CD8-positive, alpha-beta T cell (primary cell): ENCODE measurements at regions of chr12 and their contacts with region 1.

Region 1: DNA sequence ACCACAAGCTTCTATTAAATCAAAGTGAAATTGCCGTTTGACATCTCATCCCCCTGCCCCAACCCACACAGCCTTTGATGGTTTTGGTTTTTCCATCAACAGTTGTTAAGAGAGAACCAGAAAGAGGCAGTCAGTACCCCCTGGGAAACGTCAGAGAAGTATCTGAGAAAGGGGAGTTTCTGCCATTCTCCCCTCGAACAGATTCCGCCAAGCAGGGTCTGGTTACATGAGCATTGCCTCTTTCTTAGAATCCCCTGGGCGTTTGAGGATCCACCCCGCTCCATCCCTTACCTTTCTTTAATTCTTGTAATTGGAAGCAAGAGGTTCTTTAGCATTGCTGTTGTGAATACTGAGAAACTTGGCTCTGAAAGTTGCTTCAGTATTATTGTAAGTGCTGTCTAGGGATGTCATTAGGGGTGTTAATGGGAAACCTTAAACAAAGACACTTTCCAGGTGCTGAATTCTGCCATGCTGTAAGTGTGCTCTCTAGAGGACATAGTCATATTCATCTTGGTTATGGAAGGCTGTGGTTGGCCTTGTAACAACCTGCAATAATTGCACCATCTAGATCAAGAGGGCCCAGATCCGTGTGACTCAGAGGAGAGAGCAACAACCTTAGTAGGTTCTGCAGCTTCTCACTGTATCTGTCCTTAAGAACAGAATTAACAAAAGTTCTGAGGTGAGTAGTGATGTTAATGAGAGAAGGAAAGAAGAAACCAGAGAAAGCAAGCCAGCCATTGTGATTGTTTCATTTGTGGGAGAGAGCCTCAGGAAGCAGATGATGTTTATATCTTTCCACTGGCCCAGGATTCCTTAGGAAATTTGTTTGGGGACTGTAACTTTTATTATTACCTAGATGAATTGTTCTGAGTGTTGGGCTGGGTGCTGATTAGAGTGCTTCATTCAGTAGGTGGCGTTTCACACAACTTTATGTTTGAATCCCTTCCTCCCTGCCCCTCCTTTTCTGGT is 9.0 kb downstream of the TMBIM6 start:
- DNase-seq: peak in 6 of 9 experiments; percentile 20 to 62 (median 41)
- ATAC-seq: peak; percentile 90
- H3K4me3 ChIP-seq: peak overlapping the region in 1 of 2 experiments; percentile 6
- H3K4me3 Mint-ChIP-seq: peak overlapping the region; percentile 42
- H3K27ac ChIP-seq: peak overlapping the region in 1 of 2 experiments; percentile 18
- H3K27ac Mint-ChIP-seq: peak overlapping the region; percentile 69
- H3K4me1 ChIP-seq: peaks cover 57% of the 10 kb centered on the region
- H3K4me1 Mint-ChIP-seq: peaks cover 81% of the 10 kb centered on the region
- H3K27me3 ChIP-seq: no peaks in the 10 kb centered on the region
- H3K27me3 Mint-ChIP-seq: no peaks in the 10 kb centered on the region
- CTCF ChIP-seq: no peak

Region 2: DNA sequence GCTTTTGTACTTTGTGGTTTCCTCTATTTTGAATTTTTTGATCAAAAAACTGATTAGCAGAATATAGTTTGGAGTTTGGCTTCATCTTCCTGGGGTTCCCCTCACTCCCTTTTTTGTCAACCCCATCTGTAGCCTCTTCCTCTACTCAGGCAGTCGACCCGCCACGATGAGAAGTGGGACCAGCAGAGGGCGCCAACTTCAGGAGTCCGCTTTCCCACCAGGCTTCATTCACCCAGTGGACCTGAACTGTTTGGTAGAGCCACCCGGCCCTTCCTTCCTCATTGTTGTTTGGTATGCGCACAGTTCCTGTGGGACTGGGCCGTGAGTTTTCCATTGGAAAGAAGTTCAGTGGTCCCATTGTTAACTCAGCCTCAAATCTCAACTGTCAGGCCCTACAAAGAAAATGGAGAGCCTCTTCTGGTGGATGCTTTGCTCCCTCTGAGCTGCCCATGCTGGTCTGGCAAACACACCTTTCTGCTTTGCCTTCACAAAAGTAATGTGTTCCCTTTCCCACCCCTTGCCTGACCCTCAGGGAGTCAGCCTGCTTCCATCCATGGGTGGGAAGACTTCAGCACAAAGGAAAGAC is 12.8 kb after region 1 on chr12:
- CTCF ChIA-PET with region 1: interaction called, 23 read pairs
- POLR2A ChIA-PET with region 1: interaction called, 4 read pairs
- intact Hi-C with region 1: no loop called
- DNase-seq: peak; percentile 58 to 87 (median 83)
- ATAC-seq: peak; percentile 82
- H3K4me3 ChIP-seq: no peak overlapping the region
- H3K4me3 Mint-ChIP-seq: peak overlapping the region; percentile 37
- H3K27ac ChIP-seq: peak overlapping the region in 1 of 2 experiments; percentile 69
- H3K27ac Mint-ChIP-seq: peak overlapping the region; percentile 83
- H3K4me1 ChIP-seq: peaks cover 51% of the 10 kb centered on the region
- H3K4me1 Mint-ChIP-seq: peaks cover 59% of the 10 kb centered on the region
- H3K27me3 ChIP-seq: no peaks in the 10 kb centered on the region
- H3K27me3 Mint-ChIP-seq: no peaks in the 10 kb centered on the region
- CTCF ChIP-seq: peak; percentile 85